ENCODE measurements at regions of chr14 and their contacts with region 1.

Region 1: GRCh38 chr14:25132732-25133422 is 82.9 kb upstream of the STXBP6 start:
- DNase-seq: peak; percentile 31 to 95 (median 68)

Region 2: GRCh38 chr14:24734878-24735500 is 397.9 kb before region 1 on chr14:
- intact Hi-C with region 1: loop called (anchors 2 kb)
- DNase-seq: peak in 4 of 10 donors; percentile 22 to 70 (median 44)

Region 3: DNA sequence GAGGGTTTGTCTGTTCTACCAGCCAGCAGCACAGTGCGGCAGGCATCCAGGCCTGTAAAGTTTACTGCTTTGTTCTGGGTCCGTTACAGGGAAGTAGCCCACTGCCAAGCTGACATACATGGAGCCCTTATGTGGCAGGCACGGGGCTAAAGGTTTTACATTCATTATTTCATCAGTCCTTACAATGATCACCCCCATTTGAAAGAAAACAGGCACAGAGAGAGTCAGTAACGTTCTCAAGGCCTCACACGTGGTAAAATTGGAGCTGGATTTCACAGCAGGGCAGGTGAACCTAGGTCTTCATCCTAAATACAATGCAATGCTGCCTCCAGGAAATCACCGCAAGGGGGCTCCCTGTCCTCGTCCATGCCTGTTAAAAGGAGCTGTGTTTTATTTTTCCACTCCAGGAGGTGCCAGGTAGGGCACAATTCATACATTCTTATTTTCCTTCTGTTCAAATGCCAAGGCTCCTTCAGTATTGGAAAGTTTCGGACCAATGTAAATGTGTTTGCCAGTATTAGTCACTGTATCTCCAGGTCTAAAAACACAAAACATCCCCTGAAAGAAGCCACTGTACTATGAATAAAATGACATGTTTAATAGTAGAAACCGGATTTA is 326.7 kb before region 1 on chr14:
- intact Hi-C with region 1: loop called (anchors 2 kb)
- DNase-seq: peak; percentile 31 to 92 (median 65)

Region 4: GRCh38 chr14:25049568-25050268 is 83.2 kb before region 1 on chr14 and contains the start of gene STXBP6:
- intact Hi-C with region 1: loop called (anchors 5 kb)
- DNase-seq: peak; percentile 75 to 98 (median 80)

Region 5: GRCh38 chr14:25056688-25057078 is 76.2 kb before region 1 on chr14:
- intact Hi-C with region 1: loop called (anchors 5 kb)
- DNase-seq: no peak